ENCODE measurements at regions of chr20 and their contacts with region 1.

Region 1: DNA sequence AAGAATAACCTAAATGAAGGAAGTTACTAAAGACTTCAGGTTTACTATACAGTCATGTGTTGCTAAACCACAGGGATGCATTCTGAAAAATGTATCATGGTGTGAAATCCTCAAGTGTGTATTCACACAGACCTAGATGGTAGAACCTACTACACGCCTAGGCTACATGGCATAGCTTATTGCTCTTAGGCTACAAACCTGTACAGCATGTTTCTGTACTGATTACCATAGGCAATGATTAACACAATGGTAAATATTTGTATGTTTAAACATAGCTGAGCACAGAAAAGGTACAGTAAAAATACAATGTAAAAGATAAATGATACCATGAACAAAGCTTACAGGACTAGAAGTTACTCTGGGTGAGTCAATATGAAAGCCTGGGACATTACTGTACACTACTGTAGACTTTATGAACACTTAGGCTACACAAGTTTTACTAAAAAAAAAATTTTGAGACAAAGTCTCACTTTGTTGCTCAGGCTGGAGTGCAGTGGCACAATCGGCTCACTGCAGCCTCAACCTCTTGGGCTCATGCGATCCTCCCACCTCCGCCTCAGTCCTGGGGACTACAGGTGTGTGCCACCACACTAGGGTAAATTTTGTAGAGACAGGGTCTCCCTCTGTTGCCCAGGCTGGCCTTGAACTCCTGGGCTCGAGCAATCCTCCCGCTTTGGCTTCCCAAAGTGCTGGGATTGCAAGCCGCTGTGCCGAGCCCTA is 36.0 kb downstream of the ADNP start:
- DNase-seq: peak; percentile 86
- ATAC-seq: peak; percentile 92
- H3K4me3 ChIP-seq: no peak overlapping the region
- H3K27ac ChIP-seq: peak overlapping the region; percentile 54
- H3K4me1 ChIP-seq: peaks cover 26% of the 10 kb centered on the region
- H3K27me3 ChIP-seq: no peaks in the 10 kb centered on the region
- CTCF ChIP-seq: no peak
- EP300 ChIP-seq: peak in 1 of 2 experiments; percentile 13; a peak in 1 of 4 replicates
- POLR2A ChIP-seq: no peak
- RAD21 ChIP-seq: no peak

Region 2: DNA sequence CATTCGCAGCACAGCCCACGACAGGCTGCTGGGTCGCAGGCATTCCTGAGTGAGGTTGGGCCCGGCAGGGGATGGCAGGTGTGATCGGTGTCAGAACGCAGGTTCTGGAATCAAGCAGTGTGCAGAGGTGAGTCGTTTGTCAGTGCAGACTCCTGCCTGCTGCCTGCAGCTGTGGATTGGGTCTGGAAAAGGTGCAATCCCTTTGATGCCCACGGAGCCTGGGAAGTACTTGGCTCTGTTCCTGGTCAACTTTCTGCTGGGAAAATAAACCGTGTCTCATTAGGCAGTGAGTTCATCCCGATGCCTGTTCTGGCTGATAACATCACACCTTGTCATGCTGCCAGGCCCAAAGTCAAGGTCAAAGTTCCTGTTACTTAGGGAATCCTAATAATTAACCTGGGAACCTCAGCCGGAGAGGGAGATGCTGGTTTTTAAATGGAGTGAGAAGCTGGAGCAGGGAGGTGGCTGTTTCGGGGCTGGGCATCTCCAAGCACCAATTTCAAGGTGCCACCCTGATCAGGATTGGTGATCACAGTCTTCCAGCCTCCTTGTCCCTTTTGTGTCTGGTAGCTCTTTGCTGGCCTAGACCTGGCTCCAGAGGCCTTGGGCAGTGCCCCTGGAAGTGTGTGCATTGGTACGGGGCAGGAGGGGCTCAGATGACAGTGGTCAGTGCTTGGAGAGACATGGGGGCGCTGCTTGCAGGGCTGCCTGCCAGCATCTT is 39.1 kb before region 1 on chr20:
- CTCF ChIA-PET with region 1: no interaction called
- POLR2A ChIA-PET with region 1: interaction called, 7 read pairs
- in situ Hi-C with region 1: no loop called
- intact Hi-C with region 1: loop called (anchors 2 kb)
- DNase-seq: peak; percentile 89
- ATAC-seq: peak; percentile 82
- H3K4me3 ChIP-seq: peak overlapping the region in 1 of 3 experiments; percentile 39; a peak in 2 of 6 replicates
- H3K27ac ChIP-seq: no peak overlapping the region
- H3K4me1 ChIP-seq: peaks cover 43% of the 10 kb centered on the region
- H3K27me3 ChIP-seq: no peaks in the 10 kb centered on the region; a peak in 1 of 5 replicates
- CTCF ChIP-seq: peak; percentile 24; the same call in 1 of the 2 replicates
- EP300 ChIP-seq: peak in 1 of 2 experiments; percentile 47; a peak in 1 of 4 replicates
- POLR2A ChIP-seq: no peak
- RAD21 ChIP-seq: no peak

Region 3: GRCh38 chr20:50987592-50988210 is 92.4 kb after region 1 on chr20:
- CTCF ChIA-PET with region 1: no interaction called
- POLR2A ChIA-PET with region 1: no interaction called
- in situ Hi-C with region 1: no loop called
- intact Hi-C with region 1: no loop called
- DNase-seq: peak; percentile 89
- ATAC-seq: peak; percentile 90
- H3K4me3 ChIP-seq: no peak overlapping the region
- H3K27ac ChIP-seq: no peak overlapping the region
- H3K4me1 ChIP-seq: peaks cover 35% of the 10 kb centered on the region
- H3K27me3 ChIP-seq: peaks cover 0 to 12% of the 10 kb centered on the region in 2 experiments; a peak in 3 of 5 replicates
- CTCF ChIP-seq: peak; percentile 98
- EP300 ChIP-seq: no peak
- POLR2A ChIP-seq: no peak
- RAD21 ChIP-seq: peak; percentile 92